Heart right ventricle (tissue), 16 donors: ENCODE measurements at regions of chr12 and their contacts with region 1.

Region 1: DNA sequence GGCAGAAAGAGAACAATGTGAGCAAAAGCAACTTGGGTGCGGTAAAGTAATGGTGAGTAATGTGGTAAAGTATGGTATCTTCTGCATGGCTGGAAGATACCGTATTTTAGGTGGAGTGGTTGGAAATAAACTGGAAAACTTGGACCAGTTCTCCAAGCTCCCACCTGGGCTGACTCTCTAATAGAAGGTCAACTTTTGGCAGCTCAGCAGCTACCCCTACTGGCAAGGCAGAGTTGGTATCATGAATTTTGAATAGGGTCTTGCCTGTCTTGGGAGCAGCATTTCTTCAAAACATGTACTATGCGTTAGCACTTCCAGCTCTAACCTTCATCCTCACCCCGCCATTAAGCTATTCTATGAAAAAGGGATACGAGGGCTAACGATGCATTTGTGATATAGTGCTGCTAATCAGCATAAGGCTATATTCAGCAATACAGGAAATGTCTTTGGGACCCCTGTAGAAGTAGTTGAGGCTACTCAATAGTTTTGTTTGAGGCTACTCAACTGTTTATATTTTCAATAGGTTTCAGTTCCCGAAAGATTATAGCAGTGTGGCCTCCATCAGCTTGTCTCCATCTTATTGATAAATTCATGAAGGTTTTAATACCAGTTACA is 276.3 kb upstream of the FAR2 start:
- DNase-seq: peak; percentile 10 to 55
- ATAC-seq: peak in 5 of 8 donors; percentile 46 to 83 (median 74)
- H3K4me3 ChIP-seq: no peak overlapping the region
- H3K27ac ChIP-seq: no peak overlapping the region
- H3K4me1 ChIP-seq: peaks cover 0 to 8% (median 0%) of the 10 kb centered on the region in 9 donors
- H3K27me3 ChIP-seq: peaks cover 0 to 7% (median 0%) of the 10 kb centered on the region in 7 donors
- CTCF ChIP-seq: peak; percentile 45 to 82 (median 71)

Region 2: GRCh38 chr12:27733052-27733656 is 1139.6 kb before region 1 on chr12:
- intact Hi-C with region 1: loop called in 2 of 10 experiments (anchors 10 kb)
- DNase-seq: no peak
- ATAC-seq: peak in 1 of 8 donors; percentile 38
- H3K4me3 ChIP-seq: no peak overlapping the region
- H3K27ac ChIP-seq: no peak overlapping the region
- H3K4me1 ChIP-seq: no peaks in the 10 kb centered on the region
- H3K27me3 ChIP-seq: no peaks in the 10 kb centered on the region
- CTCF ChIP-seq: peak; percentile 53 to 90 (median 76)

Region 3: GRCh38 chr12:27969624-27970400 is 902.9 kb before region 1 on chr12:
- intact Hi-C with region 1: loop called in 3 of 10 experiments (anchors 5 to 10 kb)
- DNase-seq: peak; percentile 37 to 38
- ATAC-seq: peak; percentile 34 to 68 (median 58)
- H3K4me3 ChIP-seq: peak overlapping the region; percentile 33 to 62 (median 56)
- H3K27ac ChIP-seq: peak overlapping the region in 5 of 10 donors; percentile 41 to 66 (median 48)
- H3K4me1 ChIP-seq: peaks cover 0 to 36% (median 19%) of the 10 kb centered on the region in 9 donors
- H3K27me3 ChIP-seq: peaks cover 0 to 98% (median 85%) of the 10 kb centered on the region in 7 donors
- CTCF ChIP-seq: peak in 3 of 9 donors; percentile 30 to 31 (median 30)

Region 4: DNA sequence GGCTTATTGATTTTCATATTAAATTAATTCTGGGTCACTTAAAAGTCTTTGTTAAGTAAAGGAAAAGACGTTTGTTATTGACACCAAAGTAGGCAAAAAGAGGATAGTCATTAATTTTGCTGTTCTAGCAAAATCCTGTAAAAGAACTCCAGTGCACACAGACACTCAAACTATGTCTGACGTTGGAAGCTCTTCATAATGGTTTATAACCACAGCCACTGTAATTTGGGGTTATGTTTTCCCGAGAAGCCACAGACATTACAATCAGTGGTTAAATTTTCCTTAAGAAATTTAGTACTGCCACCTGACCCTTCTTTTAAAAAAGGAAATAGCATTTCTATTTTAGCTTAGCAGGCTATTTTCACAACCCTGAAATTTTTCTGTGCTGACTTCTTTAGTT is 415.0 kb before region 1 on chr12:
- intact Hi-C with region 1: loop called in 1 of 10 experiments (anchors 10 kb)
- DNase-seq: no peak
- ATAC-seq: no peak
- H3K4me3 ChIP-seq: no peak overlapping the region
- H3K27ac ChIP-seq: no peak overlapping the region
- H3K4me1 ChIP-seq: peaks cover 0 to 20% (median 5%) of the 10 kb centered on the region in 9 donors
- H3K27me3 ChIP-seq: no peaks in the 10 kb centered on the region
- CTCF ChIP-seq: no peak

Region 5: GRCh38 chr12:28793581-28794151 is 79.1 kb before region 1 on chr12:
- intact Hi-C with region 1: loop called in 1 of 10 experiments (anchors 5 kb)
- DNase-seq: no peak
- ATAC-seq: no peak
- H3K4me3 ChIP-seq: no peak overlapping the region
- H3K27ac ChIP-seq: peak overlapping the region in 1 of 10 donors; percentile 0
- H3K4me1 ChIP-seq: no peaks in the 10 kb centered on the region
- H3K27me3 ChIP-seq: no peaks in the 10 kb centered on the region
- CTCF ChIP-seq: no peak

Region 6: GRCh38 chr12:28824849-28825248 is 47.9 kb before region 1 on chr12:
- intact Hi-C with region 1: no loop called
- DNase-seq: no peak
- ATAC-seq: peak in 6 of 8 donors; percentile 27 to 59 (median 55)
- H3K4me3 ChIP-seq: no peak overlapping the region
- H3K27ac ChIP-seq: peak overlapping the region in 2 of 10 donors; percentile 13 to 38
- H3K4me1 ChIP-seq: peaks cover 0 to 8% (median 0%) of the 10 kb centered on the region in 9 donors
- H3K27me3 ChIP-seq: no peaks in the 10 kb centered on the region
- CTCF ChIP-seq: no peak

Region 7: GRCh38 chr12:28974166-28974565 is 101.4 kb after region 1 on chr12:
- intact Hi-C with region 1: no loop called
- DNase-seq: no peak
- ATAC-seq: no peak
- H3K4me3 ChIP-seq: no peak overlapping the region
- H3K27ac ChIP-seq: no peak overlapping the region
- H3K4me1 ChIP-seq: no peaks in the 10 kb centered on the region
- H3K27me3 ChIP-seq: no peaks in the 10 kb centered on the region
- CTCF ChIP-seq: no peak